ENCODE measurements at regions of chr5 and their contacts with region 1.

Region 1: DNA sequence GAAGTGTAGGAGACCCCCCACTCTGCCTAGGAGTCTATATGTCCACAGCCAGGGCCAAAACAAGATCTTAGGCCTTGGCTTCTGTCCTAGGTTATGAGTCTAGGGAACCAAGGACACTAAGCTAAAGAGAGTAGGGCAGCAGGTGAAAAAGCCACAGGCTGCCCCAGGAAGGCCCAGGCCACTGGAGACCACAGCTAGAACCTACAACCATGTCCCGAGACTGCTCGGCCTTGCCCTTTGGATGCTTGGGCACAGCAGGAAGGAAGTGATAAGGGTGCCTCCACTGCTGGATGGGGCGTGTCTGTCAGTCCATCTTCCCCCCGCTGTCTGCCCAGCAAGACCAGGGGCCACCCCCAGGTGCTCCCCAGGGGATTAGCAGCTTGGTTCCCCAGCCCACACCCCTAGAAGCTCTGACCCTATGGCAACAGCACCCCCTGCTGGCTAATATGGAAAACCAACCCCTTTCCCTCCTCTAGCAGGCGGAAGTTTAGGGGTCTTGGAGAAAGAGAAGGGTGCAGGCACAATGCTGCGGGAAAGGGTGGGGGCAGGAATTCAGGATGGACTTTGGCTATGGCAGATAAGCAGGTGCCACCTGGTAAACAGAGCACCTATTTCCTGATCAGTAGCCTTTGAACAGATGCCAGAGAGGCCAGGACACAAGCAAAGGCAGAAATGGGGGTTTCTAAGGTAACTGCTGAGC is 10.5 kb upstream of the IRF1 start:
- DNase-seq: peak in 1 of 2 experiments; percentile 81
- H3K4me3 ChIP-seq: no peak overlapping the region
- H3K27ac ChIP-seq: no peak overlapping the region
- H3K4me1 ChIP-seq: peaks cover 0 to 7% (median 3%) of the 10 kb centered on the region in 4 experiments; a peak in 3 of 7 replicates
- H3K27me3 ChIP-seq: no peaks in the 10 kb centered on the region
- CTCF ChIP-seq: peak in 2 of 3 experiments; percentile 82 to 89; a peak in 3 of 4 replicates
- EP300 ChIP-seq: no peak
- POLR2A ChIP-seq: no peak
- RAD21 ChIP-seq: peak; percentile 92 to 94

Region 2: DNA sequence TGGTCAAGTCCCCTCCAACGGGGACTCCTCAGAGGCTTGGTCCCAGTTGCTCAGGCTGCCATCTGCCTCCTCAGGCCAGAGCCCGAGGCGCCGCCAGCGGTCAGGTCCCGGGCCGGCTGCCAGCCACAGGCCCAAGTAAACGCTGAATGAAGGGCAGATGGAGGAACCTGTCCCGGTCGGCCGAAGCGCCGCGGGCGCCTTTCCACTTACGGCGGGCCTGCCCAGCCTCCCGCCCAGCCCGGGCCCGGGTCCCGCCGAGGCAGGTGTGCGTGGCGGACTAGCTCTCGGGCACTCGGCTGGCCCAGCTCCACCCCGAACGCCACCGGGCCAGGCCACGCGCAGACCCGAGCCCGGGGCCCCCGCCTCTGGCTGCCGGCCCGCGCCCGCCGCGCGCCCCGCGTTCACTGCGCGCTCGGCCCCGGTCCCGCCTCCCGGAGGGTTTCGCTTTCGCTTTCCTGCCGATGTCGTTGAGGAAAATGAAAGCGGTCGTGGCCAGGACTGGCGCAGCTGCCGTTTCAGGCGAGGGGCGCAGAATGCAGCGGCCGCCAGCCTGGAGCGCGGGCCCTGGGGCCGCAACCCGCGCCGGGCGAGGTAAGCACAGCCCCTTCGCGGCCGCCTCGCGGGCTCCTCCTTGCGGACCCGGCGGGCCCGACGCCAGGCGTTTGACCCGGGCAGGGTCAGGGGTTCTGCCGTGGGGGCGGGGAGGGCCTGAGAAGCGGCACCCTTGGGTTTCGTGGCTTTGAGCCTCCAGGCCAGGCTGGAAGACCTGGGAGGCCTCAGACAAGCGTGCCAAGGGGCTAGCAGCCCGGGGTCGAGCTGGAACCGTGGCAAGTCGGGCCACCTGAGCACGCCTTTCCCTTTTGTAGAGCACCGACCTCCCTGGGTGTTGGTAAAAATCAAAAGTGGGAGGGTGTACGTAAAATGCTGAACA is 90.4 kb before region 1 on chr5:
- CTCF ChIA-PET with region 1: interaction called, 98 read pairs
- POLR2A ChIA-PET with region 1: interaction called, 11 read pairs
- DNase-seq: peak in 1 of 2 experiments; percentile 91
- H3K4me3 ChIP-seq: peak overlapping the region; percentile 36 to 79 (median 58)
- H3K27ac ChIP-seq: peak overlapping the region; percentile 40; the same call in 1 of the 2 replicates
- H3K4me1 ChIP-seq: peaks cover 0 to 4% (median under 1%) of the 10 kb centered on the region in 4 experiments; a peak in 3 of 7 replicates
- H3K27me3 ChIP-seq: 0 out of 7 replicates have a peak, but pooled peaks cover 0 to 3% (median 0%) of the 10 kb centered on the region in 4 experiments
- CTCF ChIP-seq: peak; percentile 68 to 88 (median 82)
- EP300 ChIP-seq: no peak
- POLR2A ChIP-seq: peak in 1 of 2 experiments; percentile 55; a peak in 2 of 3 replicates
- RAD21 ChIP-seq: peak; percentile 61 to 78

Region 3: GRCh38 chr5:132437604-132438266 is 63.3 kb before region 1 on chr5:
- CTCF ChIA-PET with region 1: interaction called, 201 read pairs
- POLR2A ChIA-PET with region 1: no interaction called
- DNase-seq: no peak
- H3K4me3 ChIP-seq: no peak overlapping the region
- H3K27ac ChIP-seq: no peak overlapping the region
- H3K4me1 ChIP-seq: peaks cover 0 to 7% (median 4%) of the 10 kb centered on the region in 4 experiments; a peak in 3 of 7 replicates
- H3K27me3 ChIP-seq: no peaks in the 10 kb centered on the region; a peak in 1 of 7 replicates
- CTCF ChIP-seq: no peak
- EP300 ChIP-seq: no peak
- POLR2A ChIP-seq: no peak
- RAD21 ChIP-seq: no peak

Region 4: DNA sequence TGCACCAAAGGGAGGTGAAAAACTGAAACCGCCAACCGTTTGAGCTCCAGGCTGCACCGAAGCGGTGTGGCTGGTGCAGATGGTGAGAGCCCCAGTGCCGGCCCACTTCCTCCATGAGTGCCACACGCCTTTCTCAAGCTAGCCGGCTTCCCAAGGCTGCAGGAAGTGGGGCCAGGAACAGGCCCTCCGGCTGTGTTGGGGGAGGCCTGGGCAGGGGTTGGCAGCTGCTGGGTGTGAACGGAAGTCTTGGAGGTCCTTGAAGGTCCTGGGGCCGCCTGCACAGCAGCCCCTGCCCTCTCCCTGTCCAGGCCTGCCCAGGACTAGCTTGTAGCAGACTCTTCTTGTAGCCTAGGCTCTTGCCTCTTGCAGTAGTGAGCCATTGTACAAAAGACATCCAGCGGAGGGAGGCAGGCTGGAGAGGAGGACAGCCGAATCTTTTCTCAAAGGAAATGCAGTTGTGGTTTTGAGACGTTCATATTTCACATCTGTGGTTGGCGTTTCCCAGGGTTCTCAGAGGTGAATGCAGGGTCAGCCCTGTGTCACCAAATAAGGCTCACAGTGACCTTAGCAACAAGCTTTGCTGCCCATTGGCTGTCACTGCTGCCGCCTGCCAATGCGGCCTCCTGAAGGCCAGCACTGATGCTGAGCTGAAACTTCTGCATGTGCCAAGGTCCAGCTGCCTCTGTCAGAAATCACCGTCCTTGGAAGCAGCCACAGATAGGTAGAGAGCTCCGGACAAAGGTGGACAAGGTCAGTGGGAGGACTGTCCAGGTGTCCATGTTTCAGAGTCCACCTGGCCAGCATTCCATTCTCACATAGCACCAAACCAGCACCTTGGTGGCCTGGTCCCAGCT is 34.4 kb before region 1 on chr5:
- CTCF ChIA-PET with region 1: interaction called, 29 read pairs
- POLR2A ChIA-PET with region 1: interaction called, 3 read pairs
- DNase-seq: no peak
- H3K4me3 ChIP-seq: no peak overlapping the region
- H3K27ac ChIP-seq: no peak overlapping the region
- H3K4me1 ChIP-seq: peaks cover 6 to 19% (median 11%) of the 10 kb centered on the region in 4 experiments
- H3K27me3 ChIP-seq: no peaks in the 10 kb centered on the region
- CTCF ChIP-seq: no peak
- EP300 ChIP-seq: peak in 1 of 2 experiments; percentile 7; a peak in 1 of 3 replicates
- POLR2A ChIP-seq: no peak
- RAD21 ChIP-seq: no peak

Region 5: GRCh38 chr5:132526290-132526973 is 25.4 kb after region 1 on chr5:
- CTCF ChIA-PET with region 1: interaction called, 31 read pairs
- POLR2A ChIA-PET with region 1: no interaction called
- DNase-seq: peak; percentile 21 to 74
- H3K4me3 ChIP-seq: peak overlapping the region in 1 of 4 experiments; percentile 33; a peak in 1 of 8 replicates
- H3K27ac ChIP-seq: no peak overlapping the region
- H3K4me1 ChIP-seq: no peaks in the 10 kb centered on the region
- H3K27me3 ChIP-seq: no peaks in the 10 kb centered on the region
- CTCF ChIP-seq: peak; percentile 31 to 80 (median 69)
- EP300 ChIP-seq: no peak
- POLR2A ChIP-seq: no peak
- RAD21 ChIP-seq: peak; percentile 60 to 63